Caco-2 (cell line): ENCODE measurements at regions of chr1 and their contacts with region 1.

Region 1: GRCh38 chr1:113835642-113836307 is 23.5 kb upstream of the RSBN1 start:
- DNase-seq: peak in 1 of 2 experiments; percentile 37
- H3K4me3 ChIP-seq: no peak overlapping the region
- H3K4me3 Mint-ChIP-seq: no peak overlapping the region
- H3K27ac Mint-ChIP-seq: no peak overlapping the region
- H3K4me1 ChIP-seq: no peaks in the 10 kb centered on the region
- H3K4me1 Mint-ChIP-seq: no peaks in the 10 kb centered on the region
- H3K27me3 ChIP-seq: no peaks in the 10 kb centered on the region
- H3K27me3 Mint-ChIP-seq: peaks cover 8% of the 10 kb centered on the region
- CTCF ChIP-seq: peak in 1 of 2 experiments; percentile 37

Region 2: GRCh38 chr1:113701429-113701828 is 134.3 kb before region 1 on chr1:
- CTCF ChIA-PET with region 1: no interaction called
- POLR2A ChIA-PET with region 1: no interaction called
- intact Hi-C with region 1: no loop called
- DNase-seq: no peak
- H3K4me3 ChIP-seq: no peak overlapping the region
- H3K4me3 Mint-ChIP-seq: no peak overlapping the region
- H3K27ac Mint-ChIP-seq: no peak overlapping the region
- H3K4me1 ChIP-seq: no peaks in the 10 kb centered on the region
- H3K4me1 Mint-ChIP-seq: no peaks in the 10 kb centered on the region
- H3K27me3 ChIP-seq: no peaks in the 10 kb centered on the region
- H3K27me3 Mint-ChIP-seq: no peaks in the 10 kb centered on the region
- CTCF ChIP-seq: no peak

Region 3: GRCh38 chr1:113860891-113861290 is 25.1 kb after region 1 on chr1:
- CTCF ChIA-PET with region 1: no interaction called
- POLR2A ChIA-PET with region 1: no interaction called
- intact Hi-C with region 1: no loop called
- DNase-seq: no peak
- H3K4me3 ChIP-seq: no peak overlapping the region
- H3K4me3 Mint-ChIP-seq: no peak overlapping the region
- H3K27ac Mint-ChIP-seq: no peak overlapping the region
- H3K4me1 ChIP-seq: no peaks in the 10 kb centered on the region
- H3K4me1 Mint-ChIP-seq: no peaks in the 10 kb centered on the region
- H3K27me3 ChIP-seq: no peaks in the 10 kb centered on the region
- H3K27me3 Mint-ChIP-seq: no peaks in the 10 kb centered on the region
- CTCF ChIP-seq: no peak

Region 4: DNA sequence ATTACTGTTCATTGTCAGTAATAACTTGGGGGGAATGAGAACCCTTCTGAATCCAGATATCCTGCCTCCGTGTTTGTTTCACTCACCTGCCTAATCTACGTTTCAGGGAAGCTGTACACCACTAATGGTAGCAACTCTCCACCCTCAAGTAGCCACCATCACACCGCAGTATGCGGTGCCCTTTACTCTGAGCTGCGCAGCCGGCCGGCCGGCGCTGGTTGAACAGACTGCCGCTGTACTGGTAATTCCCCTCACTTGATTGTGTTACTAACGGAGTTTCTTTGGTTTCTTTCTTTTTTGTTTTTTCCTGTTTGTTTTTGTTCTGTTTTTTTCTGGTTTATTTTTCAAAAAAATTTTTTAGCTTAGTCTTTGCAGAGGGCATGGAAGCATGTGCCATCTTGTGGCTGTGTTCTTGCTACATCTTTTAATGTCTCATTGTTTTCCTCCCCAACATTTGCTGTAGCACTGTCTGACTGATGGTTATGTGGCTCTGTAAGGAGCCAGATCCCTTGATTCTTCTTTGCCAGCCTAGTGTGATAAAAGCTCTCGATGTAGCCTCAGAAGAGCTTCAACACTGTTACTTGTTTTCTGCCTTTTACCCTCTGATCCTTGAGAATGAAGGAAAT is 127.6 kb after region 1 on chr1:
- CTCF ChIA-PET with region 1: interaction called, 5 read pairs
- POLR2A ChIA-PET with region 1: no interaction called
- intact Hi-C with region 1: loop called (anchors 5 kb)
- DNase-seq: no peak
- H3K4me3 ChIP-seq: no peak overlapping the region
- H3K4me3 Mint-ChIP-seq: no peak overlapping the region
- H3K27ac Mint-ChIP-seq: no peak overlapping the region
- H3K4me1 ChIP-seq: no peaks in the 10 kb centered on the region
- H3K4me1 Mint-ChIP-seq: no peaks in the 10 kb centered on the region
- H3K27me3 ChIP-seq: no peaks in the 10 kb centered on the region
- H3K27me3 Mint-ChIP-seq: no peaks in the 10 kb centered on the region
- CTCF ChIP-seq: no peak

Region 5: DNA sequence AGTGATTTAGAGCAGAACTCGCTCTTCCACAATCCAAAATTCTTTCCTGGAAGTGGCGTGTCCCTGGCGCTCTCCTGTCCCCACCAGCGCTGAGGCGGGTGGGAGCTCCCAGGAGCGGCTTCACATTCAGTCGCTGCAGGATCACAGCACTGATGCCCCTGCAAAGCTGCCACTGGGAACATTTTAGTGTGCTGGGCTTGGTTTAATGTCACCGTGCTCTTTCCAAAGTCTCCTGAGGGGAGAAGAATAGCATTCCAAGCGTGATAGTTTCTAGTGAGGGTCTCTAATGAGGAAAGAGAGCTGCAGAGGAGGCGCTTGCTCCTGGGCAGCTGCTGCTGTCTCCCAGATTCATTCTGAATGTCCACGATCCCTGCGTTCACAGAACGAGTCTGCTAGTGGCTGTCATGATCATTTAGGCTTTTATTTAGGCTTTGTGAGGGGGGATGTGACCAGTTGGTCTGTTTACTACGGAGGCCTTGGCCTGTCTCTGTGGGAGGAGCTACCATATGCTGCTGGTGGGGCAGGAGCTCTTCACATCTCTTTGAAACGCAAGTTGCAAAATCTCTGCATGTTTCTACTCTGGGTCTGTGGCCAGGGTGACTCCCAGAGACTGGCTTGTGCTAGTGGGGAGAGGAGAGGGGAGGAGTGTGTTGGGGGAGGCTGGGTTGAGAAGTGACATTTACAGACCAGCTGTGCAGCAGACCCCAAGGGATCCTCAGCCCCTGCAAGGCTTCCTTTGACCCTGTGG is 166.9 kb after region 1 on chr1:
- CTCF ChIA-PET with region 1: no interaction called
- POLR2A ChIA-PET with region 1: no interaction called
- intact Hi-C with region 1: no loop called
- DNase-seq: no peak
- H3K4me3 ChIP-seq: no peak overlapping the region
- H3K4me3 Mint-ChIP-seq: no peak overlapping the region
- H3K27ac Mint-ChIP-seq: no peak overlapping the region
- H3K4me1 ChIP-seq: no peaks in the 10 kb centered on the region
- H3K4me1 Mint-ChIP-seq: no peaks in the 10 kb centered on the region
- H3K27me3 ChIP-seq: no peaks in the 10 kb centered on the region
- H3K27me3 Mint-ChIP-seq: no peaks in the 10 kb centered on the region
- CTCF ChIP-seq: no peak

Region 6: GRCh38 chr1:114282751-114283403 is 447.1 kb after region 1 on chr1:
- CTCF ChIA-PET with region 1: no interaction called
- POLR2A ChIA-PET with region 1: no interaction called
- intact Hi-C with region 1: loop called (anchors 10 kb)
- DNase-seq: peak; percentile 76 to 77
- H3K4me3 ChIP-seq: no peak overlapping the region
- H3K4me3 Mint-ChIP-seq: no peak overlapping the region
- H3K27ac Mint-ChIP-seq: no peak overlapping the region
- H3K4me1 ChIP-seq: no peaks in the 10 kb centered on the region
- H3K4me1 Mint-ChIP-seq: no peaks in the 10 kb centered on the region
- H3K27me3 ChIP-seq: no peaks in the 10 kb centered on the region
- H3K27me3 Mint-ChIP-seq: peaks cover 2% of the 10 kb centered on the region
- CTCF ChIP-seq: peak; percentile 74 to 75